ENCODE measurements at regions of chr1 and their contacts with region 1.

Region 1: DNA sequence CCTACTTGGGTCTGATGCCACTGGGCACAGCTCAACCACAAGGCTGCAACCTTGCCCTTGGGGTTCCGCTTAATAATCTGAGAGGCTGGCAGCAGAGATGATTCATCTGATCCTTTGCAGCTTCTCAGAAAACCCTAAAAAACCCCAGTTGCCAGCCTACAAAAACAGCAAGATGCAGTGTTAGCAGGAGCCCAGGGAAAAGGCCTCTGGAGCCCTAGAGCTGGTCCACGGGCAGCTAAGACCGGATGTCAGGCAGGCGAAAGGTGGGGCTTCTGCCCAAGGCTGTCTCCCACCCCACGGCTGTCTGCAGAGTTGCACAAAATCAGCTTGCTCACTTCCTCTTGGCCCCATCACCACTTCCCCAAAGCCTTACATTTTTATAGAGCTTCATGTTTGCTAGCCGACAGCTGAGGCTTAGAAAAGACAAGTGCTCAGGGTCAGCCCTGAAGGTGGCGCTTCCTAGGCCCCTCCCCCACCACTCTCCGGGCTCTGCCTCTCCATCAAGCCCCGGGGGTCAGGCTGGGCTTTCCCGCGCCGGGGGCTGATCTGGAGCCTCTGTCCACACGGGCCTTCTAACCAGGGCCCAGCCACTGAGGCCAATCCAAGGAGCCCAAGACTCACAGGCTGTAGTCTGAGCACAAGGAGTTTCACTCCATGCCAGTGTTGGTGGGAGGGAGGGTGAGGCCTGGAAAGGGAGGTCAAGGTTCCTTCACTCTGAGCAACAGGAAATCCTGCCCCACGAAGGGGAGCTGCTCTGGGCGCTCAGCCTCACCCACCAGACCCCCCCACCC is 4.2 kb upstream of the ADORA3 start:
- DNase-seq: peak; percentile 77
- H3K4me3 Mint-ChIP-seq: peak overlapping the region; percentile 54
- H3K27ac Mint-ChIP-seq: peak overlapping the region; percentile 94
- H3K4me1 Mint-ChIP-seq: peaks cover 54% of the 10 kb centered on the region
- H3K27me3 Mint-ChIP-seq: no peaks in the 10 kb centered on the region

Region 2: DNA sequence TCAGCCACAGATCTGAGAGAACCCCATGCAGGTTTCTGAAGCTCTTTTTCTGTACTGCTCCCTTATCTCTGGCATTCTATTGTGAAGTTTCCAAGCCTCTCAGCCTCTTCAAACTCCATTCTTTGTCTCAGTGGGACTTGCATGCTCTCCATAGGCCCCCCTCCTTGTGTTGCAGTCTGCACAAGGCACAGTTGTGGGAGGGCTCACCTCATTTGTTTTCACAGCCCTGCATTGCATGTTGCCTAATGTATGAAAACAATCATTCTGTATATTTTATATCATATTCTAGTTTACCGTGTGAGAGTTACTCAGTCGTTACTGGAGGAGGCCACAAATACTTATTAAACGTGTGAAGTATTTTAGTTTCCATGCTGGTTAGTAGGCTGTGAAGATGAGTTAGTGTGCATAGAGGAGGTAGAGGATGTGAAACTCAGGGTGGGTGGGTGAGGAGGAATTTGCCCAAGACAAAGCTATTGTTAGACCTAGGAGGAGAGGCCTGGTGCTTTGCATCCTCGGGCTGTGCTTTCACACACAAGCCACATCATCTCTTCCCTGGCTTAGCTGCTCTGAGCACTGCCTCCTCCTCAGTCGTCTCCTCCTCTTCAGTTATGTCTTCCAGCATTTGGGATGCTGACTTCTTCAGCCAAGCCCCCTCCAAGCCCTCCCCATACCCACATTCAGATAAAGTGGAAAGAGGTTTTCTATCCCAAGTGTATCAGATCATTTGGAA is 287.9 kb before region 1 on chr1:
- CTCF ChIA-PET with region 1: no interaction called
- POLR2A ChIA-PET with region 1: no interaction called
- DNase-seq: peak; percentile 56
- H3K4me3 Mint-ChIP-seq: peak overlapping the region; percentile 59
- H3K27ac Mint-ChIP-seq: peak overlapping the region; percentile 93
- H3K4me1 Mint-ChIP-seq: peaks cover 91% of the 10 kb centered on the region
- H3K27me3 Mint-ChIP-seq: no peaks in the 10 kb centered on the region

Region 3: DNA sequence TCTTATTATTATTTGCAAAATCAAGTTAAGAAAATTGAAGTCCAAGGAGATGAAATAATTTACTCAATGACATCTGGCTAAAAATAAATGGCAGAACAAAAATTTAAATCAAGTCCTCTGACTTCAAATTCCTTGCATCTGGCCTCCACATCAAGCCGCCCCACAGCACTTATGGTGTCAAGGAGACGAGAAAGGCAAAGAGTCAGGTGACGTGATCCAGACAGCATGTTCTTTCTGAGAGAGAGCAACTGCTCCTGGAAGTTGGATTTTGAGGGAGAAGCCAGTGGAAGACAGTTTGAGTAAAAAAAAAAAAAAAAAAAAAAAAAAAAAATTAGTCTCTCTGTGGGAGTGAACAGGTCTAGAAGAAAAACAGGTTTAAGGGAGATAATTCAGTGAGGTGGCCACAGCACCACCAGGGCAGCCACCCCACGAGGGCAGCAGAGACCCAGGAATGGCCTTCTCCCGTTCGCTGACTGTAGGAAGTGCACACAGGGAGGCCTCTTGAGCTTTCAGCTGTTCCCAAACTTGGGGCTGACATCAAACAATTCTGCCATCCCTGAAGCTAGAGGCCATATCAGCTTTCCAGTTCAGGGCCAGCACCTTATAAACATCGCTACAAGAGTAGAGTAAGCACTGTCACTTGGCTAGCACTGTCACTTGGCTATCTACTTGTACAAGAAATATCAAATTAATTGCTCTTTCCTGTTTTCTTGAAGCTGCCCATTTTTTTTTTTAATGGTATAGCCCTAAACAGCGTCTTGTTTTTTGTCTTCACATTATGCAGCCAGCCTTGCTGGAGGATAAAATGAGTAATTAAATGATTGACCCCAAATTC is 26.0 kb before region 1 on chr1:
- CTCF ChIA-PET with region 1: interaction called, 13 read pairs
- POLR2A ChIA-PET with region 1: interaction called, 4 read pairs
- DNase-seq: peak; percentile 68
- H3K4me3 Mint-ChIP-seq: no peak overlapping the region
- H3K27ac Mint-ChIP-seq: no peak overlapping the region
- H3K4me1 Mint-ChIP-seq: peaks cover 42% of the 10 kb centered on the region
- H3K27me3 Mint-ChIP-seq: peaks cover 3% of the 10 kb centered on the region

Region 4: GRCh38 chr1:111592389-111593361 is 85.1 kb after region 1 on chr1:
- CTCF ChIA-PET with region 1: interaction called, 10 read pairs
- POLR2A ChIA-PET with region 1: interaction called, 4 read pairs
- DNase-seq: peak; percentile 90
- H3K4me3 Mint-ChIP-seq: peak overlapping the region; percentile 45
- H3K27ac Mint-ChIP-seq: peak overlapping the region; percentile 88
- H3K4me1 Mint-ChIP-seq: peaks cover 60% of the 10 kb centered on the region
- H3K27me3 Mint-ChIP-seq: no peaks in the 10 kb centered on the region

Region 5: GRCh38 chr1:111619635-111620440 is 112.2 kb after region 1 on chr1 and contains the start of gene RAP1A:
- CTCF ChIA-PET with region 1: interaction called, 22 read pairs
- POLR2A ChIA-PET with region 1: interaction called, 3 read pairs
- DNase-seq: peak; percentile 94
- H3K4me3 Mint-ChIP-seq: peak within 1 kb of the TSS; percentile 93
- H3K27ac Mint-ChIP-seq: peak within 1 kb of the TSS; percentile 94
- H3K4me1 Mint-ChIP-seq: peaks cover 73% of the 10 kb centered on the region
- H3K27me3 Mint-ChIP-seq: no peaks in the 10 kb centered on the region
- total RNA-seq, gene RAP1A: 128 to 130 TPM

Region 6: GRCh38 chr1:111720274-111720976 is 212.8 kb after region 1 on chr1:
- CTCF ChIA-PET with region 1: interaction called, 10 read pairs
- POLR2A ChIA-PET with region 1: no interaction called
- DNase-seq: no peak
- H3K4me3 Mint-ChIP-seq: no peak overlapping the region
- H3K27ac Mint-ChIP-seq: peak overlapping the region; percentile 42
- H3K4me1 Mint-ChIP-seq: peaks cover 8% of the 10 kb centered on the region
- H3K27me3 Mint-ChIP-seq: no peaks in the 10 kb centered on the region

Region 7: DNA sequence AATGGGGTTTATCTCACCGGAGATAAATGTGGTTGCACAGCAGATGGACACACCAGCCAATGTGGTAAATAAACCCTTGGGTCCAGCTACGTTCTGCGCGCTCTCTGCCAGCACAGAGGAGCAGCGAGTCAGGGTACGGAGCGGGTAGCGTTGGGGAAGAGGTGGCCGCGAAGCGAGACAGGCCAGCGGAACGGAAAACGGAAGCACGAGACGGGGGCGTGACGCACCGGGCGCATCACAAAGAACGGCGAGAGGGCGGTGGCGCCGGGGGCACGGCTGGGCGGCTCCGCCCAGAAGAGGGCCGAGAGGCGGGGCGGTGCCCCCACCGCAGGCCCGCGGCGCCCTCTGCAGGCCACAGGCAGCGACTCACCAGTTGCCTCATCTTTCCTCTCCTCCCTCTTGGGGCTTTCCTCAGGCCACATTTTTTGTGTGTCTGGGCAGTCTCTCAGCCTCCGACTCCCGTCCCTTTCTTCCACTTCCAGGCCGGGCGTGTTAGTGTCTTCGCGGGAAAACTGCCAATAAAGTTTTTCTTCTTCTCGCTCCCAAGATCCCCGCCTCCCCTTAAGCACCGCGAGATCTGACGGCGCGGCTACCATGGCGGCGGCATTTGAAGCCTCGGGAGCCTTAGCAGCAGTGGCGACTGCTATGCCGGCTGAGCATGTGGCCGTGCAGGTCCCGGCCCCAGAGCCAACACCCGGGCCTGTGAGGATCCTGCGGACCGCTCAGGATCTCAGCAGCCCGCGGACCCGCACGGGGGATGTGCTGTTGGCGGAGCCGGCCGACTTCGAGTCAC is 247.9 kb after region 1 on chr1 and contains the start of gene DDX20:
- CTCF ChIA-PET with region 1: interaction called, 11 read pairs
- POLR2A ChIA-PET with region 1: no interaction called
- DNase-seq: peak; percentile 93
- H3K4me3 Mint-ChIP-seq: peak within 1 kb of the TSS; percentile 86
- H3K27ac Mint-ChIP-seq: peak within 1 kb of the TSS; percentile 96
- H3K4me1 Mint-ChIP-seq: peaks cover 49% of the 10 kb centered on the region
- H3K27me3 Mint-ChIP-seq: no peaks in the 10 kb centered on the region
- total RNA-seq, gene DDX20: 14.4 to 18.9 TPM

Measured in activated CD4-positive, alpha-beta T cell treated with anti-CD3 and anti-CD28 coated beads, Interleukin-2, amount 10 ng/mL, durations not matched to agents 7 days and 5 days (primary cell).